IMR-90 (cell line): ENCODE measurements at regions of chr1 and their contacts with region 1.

Region 1: GRCh38 chr1:68255301-68255700 is 23.0 kb upstream of the WLS start:
- DNase-seq: no peak
- ATAC-seq: no peak
- H3K4me3 ChIP-seq: no peak overlapping the region
- H3K27ac ChIP-seq: no peak overlapping the region
- H3K4me1 ChIP-seq: peaks cover 3% of the 10 kb centered on the region
- H3K27me3 ChIP-seq: no peaks in the 10 kb centered on the region
- CTCF ChIP-seq: no peak
- POLR2A ChIP-seq: no peak
- RAD21 ChIP-seq: no peak

Region 2: DNA sequence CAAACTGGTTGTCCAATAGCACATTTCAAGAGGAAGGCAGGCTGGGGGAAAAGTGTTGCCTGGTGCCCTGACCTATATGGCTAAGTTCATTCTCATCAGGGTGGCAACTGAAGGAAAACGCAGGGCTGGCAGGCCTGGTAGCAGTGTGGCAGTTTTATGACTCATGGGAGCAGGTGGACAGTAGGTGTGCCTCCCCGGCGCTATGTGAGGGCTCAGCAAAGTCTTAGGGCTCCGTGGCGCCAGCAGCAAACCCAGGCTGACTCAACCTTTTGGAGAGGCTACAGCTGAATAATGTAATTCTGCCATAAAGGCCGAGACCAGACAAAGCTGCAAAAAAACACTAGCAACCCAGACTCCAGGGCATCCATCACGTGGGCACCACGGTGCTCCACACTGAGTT is 546.7 kb before region 1 on chr1:
- CTCF ChIA-PET with region 1: no interaction called
- POLR2A ChIA-PET with region 1: no interaction called
- dilution Hi-C with region 1: no loop called
- in situ Hi-C with region 1: no loop called
- intact Hi-C with region 1: loop called (anchors 5 kb)
- DNase-seq: no peak
- ATAC-seq: no peak
- H3K4me3 ChIP-seq: no peak overlapping the region
- H3K27ac ChIP-seq: no peak overlapping the region
- H3K4me1 ChIP-seq: peaks cover 32% of the 10 kb centered on the region
- H3K27me3 ChIP-seq: no peaks in the 10 kb centered on the region
- CTCF ChIP-seq: no peak
- POLR2A ChIP-seq: no peak
- RAD21 ChIP-seq: no peak

Region 3: GRCh38 chr1:68173911-68174737 is 81.2 kb before region 1 on chr1:
- CTCF ChIA-PET with region 1: no interaction called
- POLR2A ChIA-PET with region 1: no interaction called
- dilution Hi-C with region 1: no loop called
- in situ Hi-C with region 1: no loop called
- intact Hi-C with region 1: no loop called
- DNase-seq: peak; percentile 98
- ATAC-seq: peak; percentile 77
- H3K4me3 ChIP-seq: no peak overlapping the region
- H3K27ac ChIP-seq: peak overlapping the region; percentile 82
- H3K4me1 ChIP-seq: peaks cover 25% of the 10 kb centered on the region
- H3K27me3 ChIP-seq: no peaks in the 10 kb centered on the region
- CTCF ChIP-seq: no peak
- POLR2A ChIP-seq: no peak
- RAD21 ChIP-seq: no peak

Region 4: DNA sequence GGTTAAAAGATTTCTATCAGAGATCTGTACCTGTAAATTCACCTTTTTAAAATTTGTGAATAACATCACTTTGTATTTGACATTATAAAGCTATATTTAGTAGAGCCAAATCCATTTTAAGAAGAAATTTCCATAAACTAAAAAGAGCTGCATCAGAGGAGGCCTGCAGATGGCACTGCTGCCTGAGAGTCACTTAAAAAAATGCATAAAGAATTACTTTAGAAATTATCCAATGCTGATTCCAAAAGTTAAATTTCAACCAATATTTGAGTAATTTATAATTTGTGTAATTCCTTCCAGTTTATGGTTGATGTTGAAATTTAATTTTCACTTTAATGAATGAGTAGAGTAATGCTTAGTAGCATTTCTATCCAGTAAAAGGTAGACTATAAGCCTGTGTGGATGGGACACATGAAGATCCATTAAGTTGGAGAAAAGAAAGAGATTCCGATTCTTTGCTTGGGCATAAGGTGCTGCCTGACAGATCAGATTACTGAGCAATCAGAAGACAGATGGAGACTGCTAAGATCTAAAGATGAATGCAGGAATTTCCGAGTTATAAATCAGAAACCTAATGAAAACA is 215.2 kb after region 1 on chr1:
- CTCF ChIA-PET with region 1: no interaction called
- POLR2A ChIA-PET with region 1: no interaction called
- dilution Hi-C with region 1: no loop called
- in situ Hi-C with region 1: no loop called
- intact Hi-C with region 1: no loop called
- DNase-seq: peak; percentile 41
- ATAC-seq: peak; percentile 74
- H3K4me3 ChIP-seq: no peak overlapping the region
- H3K27ac ChIP-seq: no peak overlapping the region
- H3K4me1 ChIP-seq: no peaks in the 10 kb centered on the region
- H3K27me3 ChIP-seq: no peaks in the 10 kb centered on the region
- CTCF ChIP-seq: peak; percentile 73
- POLR2A ChIP-seq: no peak
- RAD21 ChIP-seq: peak; percentile 71